Activated CD4-positive, alpha-beta memory T cell treated with anti-CD3 and anti-CD28 coated beads, Interleukin-2, amount 10 ng/mL, durations not matched to agents 7 days and 5 days (primary cell): ENCODE measurements at regions of chr1 and their contacts with region 1.

Region 1: GRCh38 chr1:24391882-24392603 is 21.5 kb downstream of the STPG1 start:
- DNase-seq: peak; percentile 74
- H3K4me3 Mint-ChIP-seq: peak overlapping the region; percentile 77
- H3K27ac Mint-ChIP-seq: peak overlapping the region; percentile 90
- H3K4me1 Mint-ChIP-seq: peaks cover 25% of the 10 kb centered on the region
- H3K27me3 Mint-ChIP-seq: no peaks in the 10 kb centered on the region

Region 2: GRCh38 chr1:24070821-24071393 is 321.1 kb before region 1 on chr1:
- CTCF ChIA-PET with region 1: interaction called, 13 read pairs
- POLR2A ChIA-PET with region 1: interaction called, 3 read pairs
- DNase-seq: peak; percentile 78
- H3K4me3 Mint-ChIP-seq: no peak overlapping the region
- H3K27ac Mint-ChIP-seq: no peak overlapping the region
- H3K4me1 Mint-ChIP-seq: peaks cover 4% of the 10 kb centered on the region
- H3K27me3 Mint-ChIP-seq: peaks cover 13% of the 10 kb centered on the region

Region 3: DNA sequence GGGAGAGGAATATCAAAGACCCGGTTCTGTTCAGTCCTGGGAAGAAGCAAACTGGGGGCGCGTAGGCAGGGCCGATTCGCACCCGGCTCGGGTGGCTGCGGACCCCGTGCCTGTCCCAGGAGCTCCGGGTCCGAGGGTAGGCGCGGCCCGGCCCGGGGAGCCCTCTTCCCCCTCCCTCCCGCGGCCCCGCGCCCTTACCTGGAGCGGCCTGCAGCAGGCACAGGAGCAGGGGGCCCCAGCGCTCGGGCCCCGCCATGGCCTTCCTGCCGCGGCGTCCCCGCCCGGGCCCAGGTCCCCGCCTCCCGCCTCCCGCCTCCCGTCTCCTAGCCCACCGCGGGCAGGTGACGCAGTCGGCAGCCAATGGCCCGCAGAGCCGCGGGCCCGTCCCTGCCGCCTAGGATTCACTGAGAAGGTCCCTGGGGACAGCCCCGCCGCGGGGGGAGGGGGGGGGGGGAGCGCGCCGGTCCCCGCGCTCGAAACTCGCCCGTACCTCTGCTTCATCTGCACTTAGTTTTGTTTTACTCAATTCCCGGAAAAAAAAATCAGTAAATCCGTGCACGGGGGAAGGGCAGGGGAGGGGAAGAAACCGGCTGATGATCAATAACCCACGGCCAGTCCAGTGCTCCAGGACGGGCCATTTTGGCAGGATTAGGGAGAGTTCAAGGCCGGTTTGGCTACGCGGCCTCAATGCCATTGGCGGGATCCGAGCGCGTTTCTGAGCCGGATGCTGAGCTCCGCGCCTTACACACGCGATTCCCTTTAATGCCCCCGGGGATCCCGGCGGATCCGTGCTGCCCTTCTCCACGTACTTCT is 204.8 kb before region 1 on chr1 and contains the start of gene IFNLR1:
- CTCF ChIA-PET with region 1: interaction called, 40 read pairs
- POLR2A ChIA-PET with region 1: interaction called, 5 read pairs
- DNase-seq: peak; percentile 79
- H3K4me3 Mint-ChIP-seq: peak within 1 kb of the TSS; percentile 79
- H3K27ac Mint-ChIP-seq: peak within 1 kb of the TSS; percentile 38
- H3K4me1 Mint-ChIP-seq: peaks cover 50% of the 10 kb centered on the region
- H3K27me3 Mint-ChIP-seq: peaks cover 2% of the 10 kb centered on the region
- total RNA-seq, gene IFNLR1: 6.0 to 6.1 TPM

Region 4: GRCh38 chr1:24321697-24322469 is 70.2 kb before region 1 on chr1:
- CTCF ChIA-PET with region 1: interaction called, 49 read pairs
- POLR2A ChIA-PET with region 1: interaction called, 11 read pairs
- DNase-seq: peak; percentile 81
- H3K4me3 Mint-ChIP-seq: peak overlapping the region; percentile 57
- H3K27ac Mint-ChIP-seq: no peak overlapping the region
- H3K4me1 Mint-ChIP-seq: peaks cover 41% of the 10 kb centered on the region
- H3K27me3 Mint-ChIP-seq: peaks cover 89% of the 10 kb centered on the region

Region 5: DNA sequence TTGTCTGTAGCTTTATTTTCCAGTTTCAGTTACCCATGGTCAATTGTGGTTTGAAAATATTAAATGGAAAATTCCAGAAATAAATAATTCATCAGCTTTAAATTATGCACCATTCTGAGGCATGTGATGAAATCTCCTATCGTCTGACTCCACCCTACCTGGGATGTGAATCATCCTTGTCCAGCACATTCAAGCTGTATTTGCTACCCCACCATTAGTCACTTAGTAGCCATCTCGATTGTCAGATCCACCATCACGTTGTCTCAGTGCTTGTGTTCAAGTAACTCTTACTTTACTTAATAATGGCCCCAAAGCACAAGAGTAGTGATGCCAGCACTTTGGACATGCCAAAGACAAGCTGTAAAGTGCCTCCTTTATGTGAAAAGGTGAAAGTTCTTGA is 17.5 kb after region 1 on chr1:
- CTCF ChIA-PET with region 1: interaction called, 50 read pairs
- POLR2A ChIA-PET with region 1: interaction called, 3 read pairs
- DNase-seq: no peak
- H3K4me3 Mint-ChIP-seq: no peak overlapping the region
- H3K27ac Mint-ChIP-seq: no peak overlapping the region
- H3K4me1 Mint-ChIP-seq: peaks cover 20% of the 10 kb centered on the region
- H3K27me3 Mint-ChIP-seq: no peaks in the 10 kb centered on the region

Region 6: DNA sequence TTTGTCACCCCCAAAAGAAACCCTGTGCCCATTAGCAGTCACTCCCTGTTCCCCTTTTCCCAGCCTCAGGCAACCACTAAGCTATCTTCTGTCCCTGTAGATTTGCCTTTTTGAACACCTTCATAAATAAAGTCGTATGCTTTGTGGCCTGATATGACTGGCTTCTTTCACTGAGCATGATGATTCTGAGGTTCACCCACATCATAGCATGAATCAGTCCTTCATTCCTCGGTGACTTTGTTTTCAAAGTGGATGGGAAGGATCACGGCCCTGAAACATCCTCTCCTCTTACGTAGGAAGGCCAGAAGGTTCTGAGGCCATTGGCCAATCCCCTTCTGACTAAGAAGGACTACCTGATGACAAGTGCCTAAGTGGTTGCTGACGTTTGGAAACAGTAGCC is 62.6 kb after region 1 on chr1:
- CTCF ChIA-PET with region 1: no interaction called
- POLR2A ChIA-PET with region 1: no interaction called
- DNase-seq: no peak
- H3K4me3 Mint-ChIP-seq: no peak overlapping the region
- H3K27ac Mint-ChIP-seq: no peak overlapping the region
- H3K4me1 Mint-ChIP-seq: no peaks in the 10 kb centered on the region
- H3K27me3 Mint-ChIP-seq: no peaks in the 10 kb centered on the region

Region 7: DNA sequence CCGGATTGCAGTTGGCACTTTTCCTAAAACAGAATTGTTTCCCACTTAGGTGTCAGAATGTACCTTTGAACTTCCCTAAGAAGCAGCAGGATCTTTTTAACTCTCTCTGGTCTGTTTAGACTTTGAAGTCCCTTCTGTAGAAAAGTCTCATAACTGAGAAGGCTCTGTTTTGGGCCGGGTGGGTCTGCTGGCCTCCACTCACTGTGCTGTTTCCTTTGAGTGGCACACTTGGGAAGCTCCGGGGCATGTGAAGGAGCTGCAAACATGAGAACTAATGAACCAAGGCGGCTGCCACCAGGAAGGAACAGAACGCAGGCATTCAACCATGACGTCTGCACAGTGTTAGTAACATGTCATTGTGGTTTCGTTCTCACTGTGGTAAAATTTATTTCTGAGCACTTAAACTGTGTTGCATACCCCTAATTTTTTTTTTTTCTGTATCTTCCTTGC is 144.4 kb after region 1 on chr1:
- CTCF ChIA-PET with region 1: interaction called, 10 read pairs
- POLR2A ChIA-PET with region 1: no interaction called
- DNase-seq: peak; percentile 75
- H3K4me3 Mint-ChIP-seq: peak overlapping the region; percentile 73
- H3K27ac Mint-ChIP-seq: peak overlapping the region; percentile 98
- H3K4me1 Mint-ChIP-seq: peaks cover 74% of the 10 kb centered on the region
- H3K27me3 Mint-ChIP-seq: no peaks in the 10 kb centered on the region

Region 8: DNA sequence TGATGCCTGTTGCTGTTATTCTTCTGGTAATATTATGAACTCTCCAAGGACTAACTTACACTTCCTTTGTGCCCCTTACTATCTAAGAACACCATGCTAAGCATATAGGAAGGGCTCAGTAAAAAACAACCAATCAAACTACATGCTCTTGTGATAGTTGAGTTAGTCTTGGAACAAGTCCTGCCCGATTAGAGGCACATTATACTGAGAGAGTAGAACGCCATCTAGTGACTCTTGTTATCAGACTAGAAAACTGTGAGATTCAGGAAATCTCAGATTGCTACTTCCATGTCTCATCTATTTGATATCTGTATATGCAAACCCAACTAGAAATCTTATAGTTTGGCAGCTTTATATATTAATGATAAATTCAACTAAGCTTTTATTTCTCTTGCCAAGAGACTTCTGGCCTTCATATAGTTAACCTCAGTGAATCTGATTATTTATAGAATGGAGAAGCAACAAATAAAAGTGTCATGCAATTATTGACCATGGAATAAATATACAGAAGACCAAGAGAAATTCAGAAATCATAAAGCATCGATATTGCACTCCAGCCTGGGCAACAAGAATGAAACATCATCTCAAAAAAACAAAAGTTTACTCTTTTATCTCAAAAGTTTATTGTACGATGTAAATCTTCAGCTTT is 243.3 kb after region 1 on chr1:
- CTCF ChIA-PET with region 1: interaction called, 10 read pairs
- POLR2A ChIA-PET with region 1: no interaction called
- DNase-seq: no peak
- H3K4me3 Mint-ChIP-seq: no peak overlapping the region
- H3K27ac Mint-ChIP-seq: no peak overlapping the region
- H3K4me1 Mint-ChIP-seq: peaks cover 9% of the 10 kb centered on the region
- H3K27me3 Mint-ChIP-seq: peaks cover 10% of the 10 kb centered on the region